CD8-positive, alpha-beta memory T cell (primary cell): ENCODE measurements at regions of chr1 and their contacts with region 1.

Region 1: DNA sequence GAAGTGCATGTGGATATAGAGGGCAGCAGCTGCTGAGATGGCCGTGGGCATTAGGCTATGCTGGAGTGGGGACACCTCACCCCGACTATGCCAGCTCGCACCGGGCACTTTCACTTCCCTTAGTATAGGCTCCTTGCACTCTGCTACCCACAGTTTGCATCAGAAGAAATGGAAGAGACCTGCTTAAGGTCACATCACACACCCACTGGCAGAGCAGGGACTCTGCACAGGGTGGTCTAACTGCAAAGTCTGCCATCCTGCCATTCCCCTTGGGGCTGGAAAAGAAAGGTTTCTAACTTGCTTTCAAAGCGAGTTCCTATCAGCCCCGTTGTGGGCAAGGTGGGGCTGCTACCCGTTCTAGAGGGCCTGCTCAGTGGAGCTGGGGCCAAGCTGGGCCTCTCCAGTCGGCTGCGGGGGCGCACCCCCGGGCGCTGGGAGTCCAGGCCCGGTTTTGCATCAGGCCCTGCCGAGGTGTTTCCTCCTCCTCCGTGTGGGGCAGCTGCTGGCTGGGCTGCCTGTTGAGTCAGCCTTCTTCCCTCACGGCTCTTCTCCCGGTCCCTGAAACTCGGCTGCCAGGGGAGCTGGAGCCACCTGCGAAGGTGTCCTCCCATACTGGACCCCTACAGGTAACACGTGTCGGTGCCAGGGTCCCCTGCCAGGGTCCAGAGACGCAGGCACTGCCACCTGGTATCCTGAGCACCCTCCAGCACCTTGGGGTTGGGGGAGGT is at the start of gene SYTL1:
- DNase-seq: peak; percentile 55 to 80 (median 68)
- H3K4me3 ChIP-seq: peak within 1 kb of the TSS; percentile 100
- H3K4me3 Mint-ChIP-seq: peak within 1 kb of the TSS; percentile 92 to 100 (median 96)
- H3K27ac ChIP-seq: peak within 1 kb of the TSS; percentile 85
- H3K27ac Mint-ChIP-seq: peak within 1 kb of the TSS; percentile 90 to 99 (median 96)
- H3K4me1 ChIP-seq: peaks cover 35% of the 10 kb centered on the region
- H3K4me1 Mint-ChIP-seq: peaks cover 39 to 70% (median 54%) of the 10 kb centered on the region in 3 donors
- H3K27me3 ChIP-seq: no peaks in the 10 kb centered on the region
- H3K27me3 Mint-ChIP-seq: no peaks in the 10 kb centered on the region
- total RNA-seq, gene SYTL1: 21.9 to 24.2 TPM

Region 2: DNA sequence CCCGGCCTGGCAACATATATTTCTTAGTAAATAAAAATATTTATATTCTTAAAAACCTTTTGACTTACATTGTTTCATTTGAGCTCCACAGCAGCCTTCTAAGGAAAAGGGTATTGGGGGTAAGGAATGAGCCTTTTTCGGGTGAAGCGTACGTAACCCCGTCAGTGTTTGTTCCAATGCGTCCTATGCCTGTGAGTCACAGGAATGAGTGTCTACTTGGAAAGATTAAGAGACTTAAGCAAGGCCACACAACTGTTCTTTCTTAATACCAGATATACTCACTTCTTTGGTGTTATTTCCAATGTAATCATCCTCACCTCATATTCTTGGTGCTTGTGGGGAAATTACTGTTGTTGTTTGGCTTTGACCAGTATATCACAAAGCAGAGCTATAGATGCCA is 84.5 kb before region 1 on chr1:
- CTCF ChIA-PET with region 1: no interaction called
- POLR2A ChIA-PET with region 1: no interaction called
- DNase-seq: no peak
- H3K4me3 ChIP-seq: no peak overlapping the region
- H3K4me3 Mint-ChIP-seq: no peak overlapping the region
- H3K27ac ChIP-seq: no peak overlapping the region
- H3K27ac Mint-ChIP-seq: peak overlapping the region in 1 of 8 donors; percentile 43
- H3K4me1 ChIP-seq: peaks cover 6% of the 10 kb centered on the region
- H3K4me1 Mint-ChIP-seq: peaks cover 35 to 50% (median 43%) of the 10 kb centered on the region in 3 donors
- H3K27me3 ChIP-seq: no peaks in the 10 kb centered on the region
- H3K27me3 Mint-ChIP-seq: no peaks in the 10 kb centered on the region

Region 3: DNA sequence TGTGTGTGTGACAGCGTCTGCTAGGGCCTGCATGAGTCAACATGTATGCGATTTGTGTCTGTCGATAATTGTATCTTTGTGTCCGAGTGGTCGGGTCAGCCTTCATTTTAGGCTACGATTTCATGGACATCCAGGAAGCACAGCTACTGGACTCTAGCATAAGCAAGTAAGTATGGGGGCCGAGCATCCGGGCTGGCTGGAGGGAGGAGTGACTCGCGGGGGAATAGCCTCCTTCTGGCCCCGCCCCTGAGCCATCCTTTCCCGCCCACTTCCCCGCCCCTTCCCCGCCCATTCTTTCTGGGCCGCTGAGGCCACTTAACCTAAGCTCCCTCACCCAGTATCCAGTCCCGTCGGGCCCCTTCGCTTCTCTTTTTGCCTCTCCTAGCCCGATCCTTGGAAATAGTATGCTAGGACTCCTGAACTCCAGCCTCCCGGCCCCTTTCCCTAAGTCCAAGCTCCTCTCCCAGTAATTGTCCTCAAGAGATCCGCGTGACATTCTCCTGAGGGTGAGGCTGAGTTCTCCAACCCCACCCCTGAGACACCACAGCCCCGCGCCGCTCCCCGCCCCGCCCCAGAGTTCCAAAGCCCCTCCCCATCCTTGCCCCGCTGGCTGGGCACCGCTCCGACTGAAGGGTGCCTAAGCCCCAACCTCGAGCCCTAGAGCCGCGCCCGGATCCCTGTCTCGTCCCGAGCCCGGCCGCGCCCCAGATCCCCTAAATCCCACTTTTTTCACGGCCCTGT is 23.9 kb after region 1 on chr1:
- CTCF ChIA-PET with region 1: interaction called, 115 read pairs
- POLR2A ChIA-PET with region 1: interaction called, 11 read pairs
- DNase-seq: peak; percentile 63 to 83 (median 72)
- H3K4me3 ChIP-seq: peak overlapping the region; percentile 62
- H3K4me3 Mint-ChIP-seq: peak overlapping the region; percentile 85 to 95 (median 87)
- H3K27ac ChIP-seq: peak overlapping the region; percentile 47
- H3K27ac Mint-ChIP-seq: peak overlapping the region in 7 of 8 donors; percentile 51 to 93 (median 78)
- H3K4me1 ChIP-seq: peaks cover 19% of the 10 kb centered on the region
- H3K4me1 Mint-ChIP-seq: peaks cover 16 to 23% (median 22%) of the 10 kb centered on the region in 3 donors
- H3K27me3 ChIP-seq: no peaks in the 10 kb centered on the region
- H3K27me3 Mint-ChIP-seq: no peaks in the 10 kb centered on the region